Endothelial cell of umbilical vein (primary cell): ENCODE measurements at regions of chr20 and their contacts with region 1.

Region 1: DNA sequence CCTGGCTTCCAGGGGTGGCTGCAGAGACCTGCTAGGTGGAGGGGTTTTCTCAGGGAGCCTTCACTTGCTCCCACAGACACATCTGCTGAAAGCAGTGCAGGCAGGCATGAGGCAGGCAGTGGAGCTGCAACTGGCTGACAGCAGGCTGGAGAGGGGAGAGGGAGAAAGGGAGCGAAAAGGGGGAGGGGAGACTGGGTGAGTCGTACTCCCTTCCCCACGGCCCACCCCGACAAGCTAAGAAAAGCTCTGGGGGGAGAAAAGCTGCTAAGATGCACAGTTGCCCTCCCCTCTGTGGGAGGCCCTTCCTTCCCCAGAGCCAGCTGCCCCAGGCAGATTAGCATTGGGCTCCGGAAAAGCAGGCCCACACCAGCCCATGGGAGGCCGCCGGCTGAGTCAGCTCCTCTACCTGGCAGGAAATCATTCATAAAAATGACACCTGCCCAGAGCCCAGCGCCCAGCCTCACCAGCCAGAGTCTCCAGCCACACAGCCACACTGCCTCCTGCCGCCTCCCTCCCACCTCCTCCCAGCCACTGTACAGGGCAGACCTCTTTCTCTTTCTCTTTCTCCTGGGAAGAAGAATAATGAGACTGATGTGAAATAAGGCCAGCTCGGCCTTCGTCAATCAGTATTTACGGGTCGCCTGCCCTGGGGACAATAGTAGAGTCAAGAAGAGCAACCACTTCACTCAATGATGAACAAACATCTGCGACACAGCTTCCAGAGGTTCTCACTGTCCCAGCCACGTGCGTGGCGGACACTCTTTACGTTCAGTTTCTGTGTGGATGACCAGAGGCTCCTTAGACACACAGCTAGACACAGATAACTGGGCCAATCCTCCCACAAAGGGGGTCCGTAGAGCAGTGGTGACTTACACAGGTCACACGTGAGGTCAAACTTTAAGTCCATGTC is 7.7 kb upstream of the C20orf203 start:
- DNase-seq: peak; percentile 76
- H3K4me3 ChIP-seq: no peak overlapping the region
- H3K27ac ChIP-seq: no peak overlapping the region
- H3K4me1 ChIP-seq: peaks cover 11% of the 10 kb centered on the region
- H3K27me3 ChIP-seq: no peaks in the 10 kb centered on the region
- CTCF ChIP-seq: no peak
- POLR2A ChIP-seq: no peak

Region 2: GRCh38 chr20:32737371-32738223 is 56.2 kb after region 1 on chr20:
- CTCF ChIA-PET with region 1: no interaction called
- POLR2A ChIA-PET with region 1: no interaction called
- dilution Hi-C with region 1: no loop called
- intact Hi-C with region 1: loop called (anchors 2 kb)
- DNase-seq: peak; percentile 67
- H3K4me3 ChIP-seq: no peak overlapping the region
- H3K27ac ChIP-seq: peak overlapping the region; percentile 76
- H3K4me1 ChIP-seq: peaks cover 9% of the 10 kb centered on the region
- H3K27me3 ChIP-seq: no peaks in the 10 kb centered on the region
- CTCF ChIP-seq: no peak
- POLR2A ChIP-seq: no peak

Region 3: DNA sequence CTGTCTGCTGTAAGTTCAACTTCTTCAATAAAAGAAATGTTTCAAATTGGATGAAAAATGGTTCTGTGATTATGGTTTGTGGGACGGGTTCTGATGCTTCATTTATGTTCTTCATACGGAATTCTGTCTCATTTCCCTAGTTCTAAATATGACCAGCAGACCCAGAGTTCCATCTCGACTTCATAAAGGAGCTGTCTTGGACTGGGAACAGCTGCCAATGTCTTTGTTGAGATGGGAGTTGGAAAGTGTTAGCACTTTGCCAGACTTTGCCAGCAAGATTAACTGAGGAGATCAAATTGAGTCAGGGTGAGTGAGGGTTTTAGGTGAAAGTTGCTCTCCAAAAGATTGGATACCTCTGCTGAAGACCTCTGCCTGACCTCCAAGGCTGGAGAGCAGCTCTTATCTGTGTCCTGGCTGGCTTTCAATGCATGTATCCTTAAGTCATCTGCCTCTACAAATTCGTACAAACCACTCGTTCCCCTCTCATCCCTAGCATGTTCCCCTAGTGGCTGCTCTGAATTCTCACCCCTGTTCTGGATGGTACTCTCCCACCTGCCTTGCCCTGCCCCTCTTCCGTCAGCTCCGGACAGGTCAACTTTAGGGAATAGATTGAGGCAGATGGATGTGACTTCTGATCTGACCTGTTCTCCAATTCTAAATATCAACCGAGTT is 177.4 kb after region 1 on chr20 and contains the start of gene EFCAB8:
- CTCF ChIA-PET with region 1: no interaction called
- POLR2A ChIA-PET with region 1: no interaction called
- dilution Hi-C with region 1: no loop called
- intact Hi-C with region 1: no loop called
- DNase-seq: no peak
- H3K4me3 ChIP-seq: no peak within 1 kb of the TSS
- H3K27ac ChIP-seq: no peak within 1 kb of the TSS
- H3K4me1 ChIP-seq: no peaks in the 10 kb centered on the region
- H3K27me3 ChIP-seq: no peaks in the 10 kb centered on the region
- CTCF ChIP-seq: no peak
- POLR2A ChIP-seq: no peak
- total RNA-seq, gene EFCAB8: 0.31 and 0.60 TPM in 2 replicates